Activated T-helper 1 cell treated with anti-CD3 and anti-CD28 coated beads, Interleukin-12 subunit alpha, Interleukin-12 subunit beta, Interleukin-2, Interleukin-4 antibody, amounts not matched to agents 30 ng/mL and 10 ng/mL and 1 ng/mL, durations not matched to agents 14 hours and 24 hours and 36 hours (primary cell): ENCODE measurements at regions of chr20 and their contacts with region 1.

Region 1: DNA sequence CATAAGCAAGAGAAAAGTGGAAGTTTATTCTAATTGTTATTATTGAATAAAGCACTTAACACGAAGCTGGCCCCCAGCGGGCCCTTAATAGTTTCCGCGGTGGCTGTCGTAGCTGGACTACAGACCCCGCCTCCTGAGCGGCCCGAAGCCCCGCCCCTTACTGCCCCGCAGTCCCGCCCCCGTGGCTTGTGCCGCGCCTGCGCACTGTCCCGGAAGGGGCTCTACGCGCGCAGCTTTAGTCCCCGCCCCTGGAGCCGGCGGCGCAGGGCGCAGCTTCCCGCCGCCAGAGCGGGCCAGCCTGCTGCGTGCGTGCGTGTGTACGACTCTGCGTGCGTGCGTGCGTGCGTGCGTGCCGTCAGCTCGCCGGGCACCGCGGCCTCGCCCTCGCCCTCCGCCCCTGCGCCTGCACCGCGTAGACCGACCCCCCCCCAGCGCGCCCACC is at the start of gene VAPB:
- DNase-seq: peak; percentile 97
- H3K4me3 Mint-ChIP-seq: peak within 1 kb of the TSS; percentile 99
- H3K27ac Mint-ChIP-seq: peak within 1 kb of the TSS; percentile 96
- H3K4me1 Mint-ChIP-seq: peaks cover 39% of the 10 kb centered on the region
- H3K27me3 Mint-ChIP-seq: peaks cover 10% of the 10 kb centered on the region
- total RNA-seq, gene VAPB: 39.7 and 40.9 TPM in 2 replicates

Region 2: DNA sequence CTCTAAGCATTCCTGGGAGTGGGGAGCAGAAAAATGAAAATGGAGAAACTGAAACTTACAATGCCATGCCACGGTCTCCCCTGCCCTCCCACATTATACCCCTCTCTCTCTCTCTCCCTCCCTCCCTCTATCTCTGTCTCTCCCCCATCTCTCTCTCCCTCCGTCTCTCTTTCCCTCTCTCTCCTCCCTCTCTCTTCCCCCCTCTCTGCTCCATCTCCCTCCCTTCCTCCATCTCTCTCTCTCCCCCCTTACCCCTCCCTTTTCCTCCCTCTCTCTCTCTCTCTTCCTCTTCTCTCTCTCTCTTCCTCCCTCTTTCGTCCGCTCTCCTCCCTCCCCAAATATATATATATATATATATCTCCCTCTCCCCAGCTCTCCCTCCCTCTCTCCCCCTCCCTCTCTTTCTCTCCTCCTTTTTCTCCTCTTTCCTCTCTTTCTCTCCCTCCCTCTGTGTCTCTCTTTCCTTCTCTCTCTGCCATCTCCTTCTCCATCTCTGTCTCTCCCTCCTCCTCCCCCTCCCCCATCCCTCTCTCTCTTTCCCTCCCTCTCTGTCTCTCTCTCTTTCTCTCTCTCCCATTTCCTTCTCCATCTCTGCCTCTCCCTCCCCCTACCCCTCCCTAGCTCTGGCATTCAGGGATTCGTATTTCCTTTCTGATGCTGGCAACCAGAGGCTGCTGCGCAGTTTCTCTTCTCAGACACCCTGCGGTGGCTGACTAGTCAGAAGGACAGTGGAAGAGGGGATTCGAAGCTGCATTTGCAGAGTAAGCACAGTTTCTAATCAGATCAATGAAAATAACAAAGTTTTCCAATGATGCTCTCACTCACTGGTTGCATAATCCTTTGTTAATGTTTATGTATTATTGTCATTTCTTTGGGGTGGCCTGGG is 13.8 kb before region 1 on chr20:
- intact Hi-C with region 1: no loop called
- DNase-seq: no peak
- H3K4me3 Mint-ChIP-seq: no peak overlapping the region
- H3K27ac Mint-ChIP-seq: no peak overlapping the region
- H3K4me1 Mint-ChIP-seq: no peaks in the 10 kb centered on the region
- H3K27me3 Mint-ChIP-seq: peaks cover 18% of the 10 kb centered on the region

Region 3: DNA sequence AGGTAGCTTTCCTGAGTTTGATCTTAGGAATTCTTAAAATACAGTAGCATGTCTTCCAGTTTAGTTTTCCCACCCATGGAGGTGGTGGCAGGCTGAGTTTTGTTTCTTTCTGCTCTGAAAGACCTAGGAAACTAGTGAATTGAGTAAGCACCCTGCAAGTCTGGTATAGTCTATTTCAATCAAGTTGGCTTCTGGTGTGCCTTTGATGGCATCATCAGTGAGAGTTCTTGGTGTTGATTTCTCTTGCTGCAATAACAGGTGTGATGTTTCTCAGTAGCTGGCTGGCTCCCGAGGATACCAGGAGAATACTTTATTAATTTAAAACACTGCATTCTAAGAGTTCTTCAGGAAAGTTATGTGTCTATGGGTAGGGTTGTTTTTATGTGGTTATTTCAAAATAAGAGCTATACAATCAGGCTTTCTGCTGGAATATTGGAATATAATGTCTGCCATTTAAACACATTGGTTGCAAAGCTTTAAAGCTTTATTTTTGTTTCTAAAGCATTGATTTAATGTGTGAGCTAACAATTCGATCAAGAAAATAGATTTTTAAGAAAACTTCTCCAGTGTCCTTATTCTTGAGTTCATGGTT is 19.2 kb after region 1 on chr20:
- intact Hi-C with region 1: loop called (anchors 1 kb)
- DNase-seq: peak; percentile 11
- H3K4me3 Mint-ChIP-seq: peak overlapping the region; percentile 65
- H3K27ac Mint-ChIP-seq: peak overlapping the region; percentile 87
- H3K4me1 Mint-ChIP-seq: peaks cover 36% of the 10 kb centered on the region
- H3K27me3 Mint-ChIP-seq: no peaks in the 10 kb centered on the region

Region 4: GRCh38 chr20:58447511-58448391 is 58.8 kb after region 1 on chr20:
- intact Hi-C with region 1: loop called (anchors 5 kb)
- DNase-seq: peak; percentile 37
- H3K4me3 Mint-ChIP-seq: no peak overlapping the region
- H3K27ac Mint-ChIP-seq: no peak overlapping the region
- H3K4me1 Mint-ChIP-seq: peaks cover 24% of the 10 kb centered on the region
- H3K27me3 Mint-ChIP-seq: no peaks in the 10 kb centered on the region

Region 5: DNA sequence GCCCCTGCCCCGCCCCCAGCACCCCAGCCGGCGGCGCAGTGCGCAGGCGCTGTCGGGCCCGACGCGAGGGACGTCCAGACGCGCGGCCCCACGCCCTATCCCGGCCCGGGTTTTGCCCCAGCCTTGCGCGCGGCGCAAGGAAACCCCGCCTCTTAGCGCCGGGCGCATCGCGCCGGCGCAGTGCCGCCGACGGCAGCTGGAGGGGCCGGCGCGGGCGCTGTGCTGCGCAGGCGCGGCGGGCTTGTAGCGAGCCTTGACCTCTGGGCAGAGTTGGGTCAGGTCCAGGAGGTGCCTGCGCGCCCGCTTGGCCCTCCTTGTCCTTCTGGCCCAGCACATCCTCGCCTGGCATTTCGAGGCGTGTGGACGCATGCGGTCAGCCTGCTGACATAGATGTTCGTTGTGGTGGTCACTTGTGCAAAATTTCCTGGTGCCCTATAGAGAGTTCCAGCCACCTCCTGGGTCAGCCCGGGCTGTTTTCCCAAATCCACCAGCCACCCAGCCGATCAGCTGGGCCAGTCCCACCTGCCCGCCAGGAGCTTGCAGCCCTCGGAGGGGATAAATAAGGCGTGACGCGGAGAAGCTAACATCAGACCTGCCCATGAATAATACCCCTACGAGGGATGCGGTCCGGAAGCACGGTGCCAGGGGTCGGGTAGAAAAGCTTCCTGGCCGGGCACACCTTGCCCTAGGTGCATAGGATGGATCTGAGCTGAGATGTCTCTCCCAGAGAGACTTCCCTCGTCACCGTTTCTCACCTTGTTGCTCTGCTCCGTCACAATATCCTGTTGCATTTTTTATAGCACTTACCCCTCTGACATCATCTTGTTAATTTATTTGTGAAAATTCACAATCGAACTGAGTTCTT is 654.1 kb after region 1 on chr20:
- intact Hi-C with region 1: loop called (anchors 2 kb)
- DNase-seq: peak; percentile 94
- H3K4me3 Mint-ChIP-seq: peak overlapping the region; percentile 93
- H3K27ac Mint-ChIP-seq: peak overlapping the region; percentile 94
- H3K4me1 Mint-ChIP-seq: peaks cover 44% of the 10 kb centered on the region
- H3K27me3 Mint-ChIP-seq: no peaks in the 10 kb centered on the region

Region 6: GRCh38 chr20:59159493-59160376 is 770.8 kb after region 1 on chr20:
- intact Hi-C with region 1: loop called (anchors 10 kb)
- DNase-seq: peak; percentile 52
- H3K4me3 Mint-ChIP-seq: peak overlapping the region; percentile 78
- H3K27ac Mint-ChIP-seq: peak overlapping the region; percentile 92
- H3K4me1 Mint-ChIP-seq: peaks cover 80% of the 10 kb centered on the region
- H3K27me3 Mint-ChIP-seq: no peaks in the 10 kb centered on the region